A673 (cell line): ENCODE measurements at regions of chr1 and their contacts with region 1.

Region 1: GRCh38 chr1:148263128-148263905 is 111.2 kb upstream of the NBPF11 start:
- DNase-seq: peak; percentile 79
- H3K4me3 ChIP-seq: peak overlapping the region; percentile 43
- H3K27ac ChIP-seq: peak overlapping the region; percentile 72
- H3K4me1 ChIP-seq: no peaks in the 10 kb centered on the region
- H3K27me3 ChIP-seq: no peaks in the 10 kb centered on the region
- CTCF ChIP-seq: no peak

Region 2: GRCh38 chr1:147585640-147586383 is 677.5 kb before region 1 on chr1:
- CTCF ChIA-PET with region 1: no interaction called
- POLR2A ChIA-PET with region 1: no interaction called
- intact Hi-C with region 1: no loop called
- DNase-seq: peak; percentile 9
- H3K4me3 ChIP-seq: no peak overlapping the region
- H3K27ac ChIP-seq: no peak overlapping the region
- H3K4me1 ChIP-seq: peaks cover 20% of the 10 kb centered on the region
- H3K27me3 ChIP-seq: no peaks in the 10 kb centered on the region
- CTCF ChIP-seq: no peak

Region 3: DNA sequence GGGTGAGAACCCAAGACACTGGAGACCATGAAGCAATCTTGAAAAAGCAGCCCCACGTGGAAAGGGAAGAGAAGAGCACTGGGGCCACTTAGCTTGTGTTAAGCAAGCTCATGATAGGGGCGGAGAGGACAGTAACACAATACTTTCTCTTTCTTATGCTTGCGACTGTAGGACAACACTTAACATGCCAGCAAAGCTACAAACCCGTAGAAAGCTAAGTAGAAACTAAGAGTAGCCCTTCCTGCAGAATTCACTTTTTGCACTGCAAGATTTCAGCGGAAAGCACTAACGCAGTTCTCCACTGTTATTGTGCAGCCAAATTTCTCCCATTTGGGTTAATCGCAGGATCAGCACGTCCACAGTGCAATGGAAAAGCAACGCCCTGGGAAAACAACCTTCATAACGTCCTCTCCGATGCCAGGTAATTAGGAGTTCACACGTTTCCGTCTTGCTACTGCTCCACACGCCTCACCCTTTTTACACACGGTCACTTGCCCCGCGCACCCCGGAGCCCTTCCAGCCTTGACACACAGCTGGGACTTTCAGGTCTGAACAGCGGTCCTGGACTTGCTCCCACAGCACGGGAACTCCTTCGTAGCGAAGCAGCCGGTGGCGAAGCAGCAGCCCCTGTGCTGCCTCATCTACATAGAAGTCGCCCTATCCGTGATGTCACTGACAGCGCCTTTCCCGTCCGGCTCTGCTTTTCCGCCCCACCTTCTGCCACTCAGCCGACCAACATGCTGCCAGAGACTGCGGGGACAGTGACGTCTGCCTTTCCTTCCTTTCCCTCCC is 71.2 kb after region 1 on chr1:
- CTCF ChIA-PET with region 1: no interaction called
- POLR2A ChIA-PET with region 1: interaction called, 5 read pairs
- intact Hi-C with region 1: loop called (anchors 10 kb)
- DNase-seq: peak; percentile 86
- H3K4me3 ChIP-seq: peak overlapping the region; percentile 52
- H3K27ac ChIP-seq: peak overlapping the region; percentile 95
- H3K4me1 ChIP-seq: peaks cover 23% of the 10 kb centered on the region
- H3K27me3 ChIP-seq: no peaks in the 10 kb centered on the region
- CTCF ChIP-seq: no peak